Activated CD8-positive, alpha-beta memory T cell treated with anti-CD3 and anti-CD28 coated beads, Interleukin-2, amount 10 ng/mL, durations not matched to agents 7 days and 5 days (primary cell): ENCODE measurements at regions of chr17 and their contacts with region 1.

Region 1: DNA sequence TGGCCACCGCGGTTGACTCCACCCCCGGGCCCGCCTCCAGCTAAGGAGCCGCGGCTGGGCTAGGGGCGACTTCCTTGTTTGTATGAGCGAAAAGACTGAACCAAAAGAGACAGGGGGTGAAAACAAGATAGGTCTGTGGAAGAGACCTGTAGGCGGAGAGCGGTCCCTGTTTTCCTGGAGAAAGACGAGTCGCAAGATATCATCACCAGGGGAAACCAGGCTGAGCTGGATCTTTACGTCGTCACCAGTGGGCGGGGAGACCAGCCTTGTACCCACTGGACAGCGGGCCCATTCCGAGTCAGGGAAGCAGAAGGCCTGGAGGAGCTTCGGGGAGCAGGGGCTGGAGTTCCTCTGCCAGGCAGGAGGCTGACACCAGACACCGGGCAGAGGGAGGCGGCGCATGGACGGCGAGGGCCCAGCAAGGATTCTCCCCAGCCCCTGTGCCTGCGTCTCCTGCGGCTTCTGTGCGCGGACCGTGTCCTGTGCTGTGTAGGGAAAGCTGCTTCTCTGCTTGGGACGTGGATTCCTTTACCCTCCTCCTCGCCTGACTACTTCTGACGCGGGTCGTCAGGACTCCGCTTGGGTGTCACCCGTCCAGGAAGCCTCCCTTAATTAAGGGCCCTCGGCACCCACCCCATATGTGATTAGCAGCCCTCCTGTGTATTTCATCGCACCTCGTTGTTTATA is 10.3 kb upstream of the ARL4D start:
- DNase-seq: peak; percentile 94
- ATAC-seq: peak; percentile 79
- H3K4me3 Mint-ChIP-seq: peak overlapping the region; percentile 97
- H3K27ac Mint-ChIP-seq: peak overlapping the region; percentile 98
- H3K4me1 Mint-ChIP-seq: peaks cover 21% of the 10 kb centered on the region
- H3K27me3 Mint-ChIP-seq: no peaks in the 10 kb centered on the region

Region 2: DNA sequence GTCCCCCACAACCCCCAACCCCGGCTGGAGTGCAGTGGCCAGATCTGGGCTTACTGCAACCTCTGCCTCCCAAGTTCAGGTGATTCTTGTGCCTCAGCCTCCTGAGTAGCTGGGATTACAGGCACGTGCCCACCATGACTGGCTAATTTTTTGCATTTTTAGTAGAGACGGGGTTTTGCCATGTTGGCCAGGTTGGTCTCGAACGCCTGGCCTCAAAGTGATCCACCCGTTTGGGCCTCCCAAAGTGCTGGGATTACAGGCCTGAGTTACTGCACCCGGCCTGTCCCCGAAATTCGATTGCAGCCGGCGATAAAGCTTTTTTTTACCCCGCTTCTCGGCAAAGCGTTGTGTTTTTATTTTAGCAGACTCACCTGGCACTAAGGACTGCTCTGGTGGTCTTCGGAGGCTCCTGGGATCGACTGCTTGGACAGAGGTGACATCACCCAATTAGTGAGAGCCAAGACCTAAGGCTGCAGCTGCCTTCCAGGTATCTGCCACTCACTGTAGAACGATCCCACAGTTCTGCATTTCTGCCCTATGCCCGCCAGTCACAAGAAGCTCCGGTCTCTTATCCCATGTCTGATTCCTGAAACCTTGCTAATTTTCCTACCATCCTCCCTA is 71.9 kb before region 1 on chr17:
- CTCF ChIA-PET with region 1: no interaction called
- DNase-seq: peak; percentile 66
- ATAC-seq: no peak
- H3K4me3 Mint-ChIP-seq: no peak overlapping the region
- H3K27ac Mint-ChIP-seq: peak overlapping the region; percentile 64
- H3K4me1 Mint-ChIP-seq: peaks cover 21% of the 10 kb centered on the region
- H3K27me3 Mint-ChIP-seq: no peaks in the 10 kb centered on the region

Region 3: DNA sequence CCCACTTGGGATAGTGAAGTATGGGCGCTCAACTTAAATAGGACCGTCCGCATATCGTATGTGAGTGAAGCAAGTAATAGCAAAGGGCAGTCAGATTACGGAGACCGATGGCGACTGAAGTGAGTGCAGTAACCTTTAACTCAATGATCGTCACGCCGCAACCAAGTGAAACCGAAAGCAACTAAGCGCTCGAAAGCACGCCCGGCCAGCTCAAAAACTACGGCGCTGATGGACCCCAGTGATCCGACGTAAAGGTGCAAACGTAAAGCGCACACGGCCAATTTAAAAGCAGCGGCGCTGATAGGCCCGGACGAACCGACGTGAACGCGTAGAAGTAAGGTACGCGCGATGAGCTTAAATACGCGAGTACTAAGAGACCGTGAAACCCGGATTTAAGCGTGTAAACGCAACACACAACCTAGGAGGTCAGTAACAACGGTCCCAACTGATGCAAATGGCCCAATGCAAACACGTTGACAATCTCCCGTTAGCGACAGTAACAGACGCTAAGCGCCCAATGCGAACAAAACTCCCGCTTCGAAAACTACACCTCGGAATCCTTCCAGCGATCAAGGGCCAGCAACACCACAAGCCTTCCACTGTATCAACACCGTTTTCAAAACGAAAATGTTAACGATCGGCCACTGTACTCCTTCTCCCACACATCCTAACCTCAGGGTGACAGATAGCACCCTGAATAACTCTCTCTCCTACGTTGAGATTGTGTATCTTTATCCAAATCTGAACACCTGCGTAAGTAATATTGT is 27.6 kb before region 1 on chr17:
- CTCF ChIA-PET with region 1: interaction called, 15 read pairs
- DNase-seq: peak; percentile 97
- ATAC-seq: peak; percentile 82
- H3K4me3 Mint-ChIP-seq: peak overlapping the region; percentile 88
- H3K27ac Mint-ChIP-seq: peak overlapping the region; percentile 99
- H3K4me1 Mint-ChIP-seq: peaks cover 32% of the 10 kb centered on the region
- H3K27me3 Mint-ChIP-seq: no peaks in the 10 kb centered on the region

Region 4: DNA sequence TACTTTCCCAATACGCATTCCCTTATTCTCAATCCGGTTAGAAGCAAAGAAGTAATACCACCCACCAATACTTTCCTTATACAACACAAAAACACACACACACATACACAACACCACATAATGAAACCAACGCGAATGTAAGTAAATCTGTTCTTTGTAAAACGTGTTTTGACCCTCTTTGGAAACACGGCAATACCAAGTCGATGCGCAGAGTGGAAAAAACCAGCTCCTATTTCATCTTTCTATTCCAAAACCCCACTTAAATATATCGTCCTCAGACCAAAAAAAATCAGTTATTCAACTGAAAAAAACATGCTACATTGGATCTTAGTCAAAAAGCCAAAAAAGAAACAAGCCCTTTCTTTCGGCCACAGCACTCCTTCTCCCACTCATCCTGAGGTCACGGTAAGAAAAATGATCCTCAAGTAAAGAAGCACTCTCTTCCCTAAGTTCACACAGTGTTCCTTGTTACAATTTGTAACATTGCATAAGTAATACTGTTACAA is 20.7 kb before region 1 on chr17:
- CTCF ChIA-PET with region 1: interaction called, 32 read pairs
- DNase-seq: peak; percentile 74
- ATAC-seq: peak; percentile 57
- H3K4me3 Mint-ChIP-seq: peak overlapping the region; percentile 90
- H3K27ac Mint-ChIP-seq: peak overlapping the region; percentile 99
- H3K4me1 Mint-ChIP-seq: peaks cover 40% of the 10 kb centered on the region
- H3K27me3 Mint-ChIP-seq: no peaks in the 10 kb centered on the region

Region 5: DNA sequence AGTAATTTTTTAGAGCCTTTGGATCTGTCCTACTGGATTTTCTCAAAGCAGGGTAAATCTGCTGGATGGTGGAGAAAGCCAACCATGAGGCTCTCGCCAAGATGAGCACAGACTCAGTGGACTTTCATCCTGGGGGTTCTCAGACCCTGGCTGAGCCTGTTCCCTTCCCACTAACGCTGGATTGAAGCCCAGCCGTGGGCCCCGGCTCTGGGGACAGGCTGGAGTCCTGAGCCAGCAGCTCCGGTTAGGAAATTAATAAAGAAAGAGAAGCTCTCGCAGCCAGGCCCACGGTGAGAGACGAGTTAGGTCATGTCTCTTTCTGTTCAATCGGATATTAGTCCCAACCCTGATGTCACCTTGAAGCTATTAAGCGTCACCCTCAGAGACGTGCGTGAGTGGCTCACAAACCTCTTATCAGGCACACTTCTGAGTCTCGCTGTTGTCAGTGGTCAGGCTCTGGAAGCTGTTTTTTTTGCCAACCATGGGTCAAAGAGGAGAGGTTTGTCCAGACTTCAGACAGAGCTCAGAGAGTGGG is 246.2 kb after region 1 on chr17:
- CTCF ChIA-PET with region 1: no interaction called
- DNase-seq: no peak
- ATAC-seq: no peak
- H3K4me3 Mint-ChIP-seq: no peak overlapping the region
- H3K27ac Mint-ChIP-seq: no peak overlapping the region
- H3K4me1 Mint-ChIP-seq: no peaks in the 10 kb centered on the region
- H3K27me3 Mint-ChIP-seq: peaks cover 21% of the 10 kb centered on the region